Dorsolateral prefrontal cortex (tissue), 120 donors: ENCODE measurements at regions of chr14 and their contacts with region 1.

Region 1: DNA sequence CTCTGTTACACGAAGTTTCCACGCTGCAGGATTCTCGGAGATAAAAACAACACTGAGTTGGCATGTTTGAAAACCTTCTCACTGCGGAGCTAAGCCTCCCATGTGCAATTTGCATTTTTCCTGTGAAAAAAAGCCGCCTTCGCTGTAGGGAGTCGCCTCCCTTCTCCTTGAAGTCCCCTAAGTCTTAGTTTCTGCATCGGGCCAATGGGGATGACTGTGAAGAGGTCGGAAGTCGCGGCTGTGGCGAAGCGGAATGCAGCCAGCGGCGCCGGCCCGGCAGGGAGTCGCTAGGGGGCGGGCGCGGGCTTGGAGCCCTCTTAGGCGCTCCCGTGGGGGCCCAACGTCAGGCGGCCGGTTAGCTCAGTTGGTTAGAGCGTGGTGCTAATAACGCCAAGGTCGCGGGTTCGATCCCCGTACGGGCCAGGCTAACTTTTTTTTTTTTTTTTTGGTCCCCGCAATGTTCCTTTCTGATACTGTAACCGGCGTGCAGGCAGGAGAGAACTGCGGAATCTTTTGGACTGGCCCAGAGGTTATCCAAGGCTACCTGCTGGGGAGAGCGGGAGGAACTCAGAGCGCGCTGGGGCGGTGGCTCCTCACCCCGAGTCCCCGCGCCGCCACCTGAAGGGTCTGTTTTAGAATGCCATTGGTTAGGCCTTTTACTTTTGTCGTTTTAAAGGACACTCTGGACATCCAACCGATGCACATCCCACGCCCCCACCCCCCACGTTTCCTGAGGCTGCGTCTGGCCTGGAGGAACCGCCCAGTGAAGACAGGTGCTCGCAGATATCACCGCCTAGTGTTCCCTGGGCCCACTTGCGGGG is 2.6 kb upstream of the ZNF839 start:
- DNase-seq: peak; percentile 89 to 97 (median 96)
- H3K4me3 ChIP-seq: peak overlapping the region; percentile 42 to 81 (median 61)
- H3K27ac ChIP-seq: peak overlapping the region; percentile 66 to 100 (median 99)
- H3K27me3 ChIP-seq: no peaks in the 10 kb centered on the region
- CTCF ChIP-seq: peak; percentile 52 to 96 (median 87)

Region 2: DNA sequence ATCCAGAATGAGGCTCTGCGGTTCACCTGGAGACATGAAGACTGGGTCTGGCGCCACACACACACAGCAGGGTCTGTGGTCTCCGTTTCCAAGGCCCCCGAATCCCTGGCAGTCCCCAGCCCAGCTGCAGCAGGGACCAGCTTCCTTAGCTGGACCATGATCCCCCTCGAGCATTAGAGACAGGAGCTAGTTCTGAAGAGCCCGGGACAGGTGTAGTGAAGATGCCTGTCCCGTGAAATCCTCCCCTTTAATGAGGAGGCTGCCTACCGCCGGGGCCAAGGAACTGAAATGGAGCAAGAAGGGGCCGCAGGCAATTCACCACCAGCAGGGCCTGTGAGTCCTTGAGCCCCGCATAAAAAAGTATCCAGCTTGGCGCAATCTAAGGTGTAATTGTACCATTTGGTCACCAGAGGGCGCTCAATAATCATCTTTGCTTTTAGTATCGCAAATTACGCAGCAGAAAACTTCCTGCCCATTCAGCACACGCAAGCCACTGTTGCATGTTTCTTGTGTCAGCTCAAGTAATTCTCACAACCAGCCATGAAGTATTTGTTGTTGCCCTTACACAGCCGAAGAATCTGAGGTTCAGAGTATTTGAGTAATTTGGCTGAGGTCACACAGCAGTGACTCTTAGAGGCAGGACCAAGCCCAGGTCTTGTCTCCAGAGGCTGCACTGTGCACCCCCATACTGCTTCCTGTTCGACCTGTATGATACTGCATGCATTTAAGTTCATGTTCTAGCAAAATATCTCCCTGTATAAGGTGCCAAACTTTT is 609.7 kb before region 1 on chr14:
- intact Hi-C with region 1: loop called in 1 of 2 experiments (anchors 10 kb)
- DNase-seq: peak in 3 of 10 donors; percentile 27 to 61 (median 52)
- H3K4me3 ChIP-seq: peak overlapping the region in 16 of 59 donors; percentile 6 to 38 (median 22)
- H3K27ac ChIP-seq: peak overlapping the region in 11 of 59 donors; percentile 10 to 72 (median 45)
- H3K27me3 ChIP-seq: peaks cover 0 to 26% (median 7%) of the 10 kb centered on the region in 45 donors
- CTCF ChIP-seq: peak; percentile 71 to 98 (median 91)

Region 3: DNA sequence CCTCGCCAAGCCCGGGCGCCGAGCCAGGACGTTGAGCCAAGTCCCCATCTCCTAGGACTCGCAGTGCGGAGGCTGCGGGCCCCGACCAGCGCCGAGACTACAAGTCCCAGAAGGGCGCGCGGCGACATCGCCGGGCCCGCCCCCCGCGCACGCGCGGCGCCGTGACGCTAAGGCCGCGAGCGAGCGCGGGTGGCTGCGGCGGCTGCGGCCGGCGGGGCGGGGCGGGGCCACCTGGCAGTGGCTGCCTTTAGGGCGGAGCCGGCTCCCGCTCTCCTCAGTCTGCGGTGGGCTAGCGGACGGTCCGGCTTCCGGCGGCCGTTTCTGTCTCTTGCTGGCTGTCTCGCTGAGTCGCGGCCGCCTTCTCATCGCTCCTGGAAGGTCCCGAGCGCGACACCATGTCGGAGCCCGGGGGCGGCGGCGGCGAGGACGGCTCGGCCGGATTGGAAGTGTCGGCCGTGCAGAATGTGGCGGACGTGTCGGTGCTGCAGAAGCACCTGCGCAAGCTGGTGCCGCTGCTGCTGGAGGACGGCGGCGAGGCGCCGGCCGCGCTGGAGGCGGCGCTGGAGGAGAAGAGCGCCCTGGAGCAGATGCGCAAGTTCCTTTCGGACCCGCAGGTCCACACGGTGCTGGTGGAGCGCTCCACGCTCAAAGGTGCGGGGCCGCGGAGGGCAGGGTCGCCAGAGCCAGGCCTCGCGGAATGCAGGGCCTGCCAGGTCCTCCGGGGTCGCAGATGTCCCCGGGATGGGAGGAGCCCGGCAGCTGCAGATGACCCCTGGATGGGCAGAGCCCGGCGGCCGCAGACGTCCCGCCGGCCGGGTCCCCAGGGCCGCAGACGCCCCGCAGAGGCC is 352.4 kb before region 1 on chr14 and contains the start of gene DYNC1H1:
- intact Hi-C with region 1: loop called (anchors 2 to 5 kb)
- DNase-seq: peak; percentile 91 to 97 (median 94)
- H3K4me3 ChIP-seq: peak within 1 kb of the TSS; percentile 75 to 100 (median 98)
- H3K27ac ChIP-seq: peak within 1 kb of the TSS; percentile 82 to 100 (median 97)
- H3K27me3 ChIP-seq: no peaks in the 10 kb centered on the region
- CTCF ChIP-seq: peak in 7 of 56 donors; percentile 5 to 20 (median 10)
- total RNA-seq, gene DYNC1H1: 740 to 1,310 (median 1,110) TPM

Region 4: GRCh38 chr14:102086972-102087761 is 229.8 kb before region 1 on chr14 and contains the start of gene HSP90AA1:
- intact Hi-C with region 1: loop called in 1 of 2 experiments (anchors 5 kb)
- DNase-seq: peak; percentile 85 to 94 (median 90)
- H3K4me3 ChIP-seq: peak within 1 kb of the TSS; percentile 65 to 99 (median 85)
- H3K27ac ChIP-seq: peak within 1 kb of the TSS; percentile 99 to 100 (median 100)
- H3K27me3 ChIP-seq: no peaks in the 10 kb centered on the region
- CTCF ChIP-seq: peak in 47 of 56 donors; percentile 11 to 57 (median 41)
- total RNA-seq, gene HSP90AA1: 420 to 2,880 (median 848) TPM

Region 5: DNA sequence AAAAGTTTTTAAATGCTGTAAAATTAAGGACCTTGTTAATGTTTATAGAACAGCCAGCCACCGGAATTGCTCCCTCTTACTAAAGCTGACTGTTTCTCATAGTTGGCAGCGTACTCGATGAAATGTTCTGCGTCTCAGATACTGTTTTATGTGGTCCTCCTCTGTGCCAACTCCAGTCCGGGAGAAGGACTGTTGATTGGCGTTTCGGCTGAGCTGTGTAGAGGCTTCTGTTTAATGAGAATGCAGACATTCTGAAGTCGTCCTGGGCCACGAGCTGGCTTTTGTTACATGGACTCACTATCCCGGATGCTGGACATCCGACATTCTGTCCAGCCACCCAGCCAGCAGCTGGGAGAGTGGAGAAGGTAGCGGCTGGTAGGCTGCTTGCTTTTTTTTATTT is 101.9 kb before region 1 on chr14:
- intact Hi-C with region 1: loop called in 1 of 2 experiments (anchors 5 kb)
- DNase-seq: peak in 9 of 10 donors; percentile 35 to 84 (median 69)
- H3K4me3 ChIP-seq: peak overlapping the region in 25 of 59 donors; percentile 1 to 44 (median 23)
- H3K27ac ChIP-seq: peak overlapping the region; percentile 41 to 100 (median 81)
- H3K27me3 ChIP-seq: no peaks in the 10 kb centered on the region
- CTCF ChIP-seq: peak in 9 of 56 donors; percentile 4 to 31 (median 16)

Region 6: GRCh38 chr14:102362545-102363181 is 45.7 kb after region 1 on chr14 and contains the starts of genes CINP and TECPR2:
- intact Hi-C with region 1: loop called in 1 of 2 experiments (anchors 5 kb)
- DNase-seq: peak; percentile 99 to 100 (median 99)
- H3K4me3 ChIP-seq: peak within 1 kb of the TSS; percentile 66 to 98 (median 88)
- H3K27ac ChIP-seq: peak within 1 kb of the TSS; percentile 72 to 100 (median 98)
- H3K27me3 ChIP-seq: no peaks in the 10 kb centered on the region
- CTCF ChIP-seq: peak in 12 of 56 donors; percentile 7 to 46 (median 18)
- total RNA-seq, gene CINP: 31.4 to 69.6 (median 51.2) TPM
- total RNA-seq, gene TECPR2: 54.3 to 129 (median 78.9) TPM

Region 7: DNA sequence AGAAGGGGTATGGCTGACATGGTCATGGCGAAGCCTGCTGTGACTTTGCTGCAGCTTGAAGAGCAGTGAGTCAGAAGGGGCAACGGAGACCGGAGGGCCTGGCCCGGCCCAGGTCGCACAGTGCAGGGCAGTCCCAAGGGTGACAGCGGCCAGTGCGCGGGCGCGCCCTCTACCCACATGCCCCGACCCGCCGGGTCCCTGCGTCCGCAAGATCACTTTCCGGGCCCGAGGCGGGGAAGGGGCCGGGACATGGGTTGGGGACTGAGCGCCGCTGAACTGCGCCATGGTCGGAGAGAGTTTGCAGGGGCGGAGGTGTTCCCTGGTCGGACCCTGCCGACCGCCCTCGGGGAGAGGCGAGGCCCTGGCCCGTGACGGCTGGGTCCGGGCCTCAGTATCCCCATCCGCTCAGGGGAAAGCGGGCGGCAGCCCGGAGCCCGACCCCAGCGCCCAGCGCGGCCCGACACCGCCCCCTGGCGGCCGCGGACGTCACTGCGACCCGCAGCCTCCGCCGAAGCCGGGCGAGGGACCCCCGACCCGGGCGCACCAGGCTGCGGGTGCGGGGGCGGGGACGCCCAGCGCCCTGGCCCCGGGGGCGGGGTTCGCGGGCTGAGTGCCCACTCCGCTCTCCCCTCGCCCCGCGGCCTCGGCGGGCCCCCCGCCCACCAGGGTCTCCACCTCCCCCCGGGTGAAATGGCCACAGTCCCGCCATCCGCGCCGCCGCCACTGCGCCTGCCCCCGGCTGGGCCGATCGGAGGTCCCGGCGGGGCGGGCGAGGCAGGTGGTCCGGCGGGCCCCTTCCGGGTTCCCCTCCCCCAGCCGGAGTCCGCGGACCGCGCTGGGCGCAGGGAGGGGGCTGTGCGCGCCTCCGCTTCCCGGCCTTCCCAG is 199.8 kb after region 1 on chr14:
- intact Hi-C with region 1: loop called (anchors 2 to 5 kb)
- DNase-seq: peak in 3 of 10 donors; percentile 48 to 81 (median 67)
- H3K4me3 ChIP-seq: peak overlapping the region; percentile 47 to 90 (median 72)
- H3K27ac ChIP-seq: peak overlapping the region in 53 of 59 donors; percentile 16 to 96 (median 73)
- H3K27me3 ChIP-seq: no peaks in the 10 kb centered on the region
- CTCF ChIP-seq: peak; percentile 39 to 99 (median 90)

Region 8: GRCh38 chr14:102891556-102891955 is 574.6 kb after region 1 on chr14:
- intact Hi-C with region 1: no loop called
- DNase-seq: no peak
- H3K4me3 ChIP-seq: no peak overlapping the region
- H3K27ac ChIP-seq: no peak overlapping the region
- H3K27me3 ChIP-seq: no peaks in the 10 kb centered on the region
- CTCF ChIP-seq: no peak